Body of pancreas (tissue), 4 donors: ENCODE measurements at regions of chr4 and their contacts with region 1.

Region 1: DNA sequence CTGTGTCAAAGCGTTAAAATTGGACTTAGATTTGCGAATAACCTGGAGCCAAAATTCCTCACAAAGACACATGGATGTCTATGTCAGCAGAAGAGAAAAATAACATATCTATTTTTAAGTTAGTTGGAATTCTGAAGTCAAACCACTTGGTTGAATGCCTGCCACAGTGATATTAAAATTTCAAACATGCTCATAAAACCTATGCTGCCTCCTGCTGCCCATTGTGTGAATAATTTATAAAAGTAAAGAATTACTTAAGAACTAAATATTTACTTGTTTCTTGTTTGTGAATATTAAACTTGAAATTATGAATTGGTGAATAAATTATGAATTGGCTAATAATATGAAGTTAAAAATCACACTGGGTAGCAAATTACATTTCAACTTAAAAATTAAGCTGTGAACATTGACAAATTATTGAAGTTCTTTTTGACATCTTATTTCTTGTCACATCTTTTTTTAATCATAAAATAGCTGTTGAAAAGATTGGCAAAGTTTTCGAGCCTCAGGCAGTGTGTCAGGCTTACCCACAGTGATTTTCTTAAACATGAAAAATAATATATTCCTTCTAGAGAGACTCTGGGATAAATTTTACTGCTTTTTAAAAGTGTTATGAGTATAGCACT is 35.4 kb downstream of the FABP2 start:
- DNase-seq: peak in 2 of 4 donors; percentile 25 to 35
- ATAC-seq: peak; percentile 50
- H3K4me3 ChIP-seq: no peak overlapping the region
- H3K27ac ChIP-seq: no peak overlapping the region
- H3K4me1 ChIP-seq: peaks cover 27% of the 10 kb centered on the region
- H3K27me3 ChIP-seq: no peaks in the 10 kb centered on the region
- CTCF ChIP-seq: peak in 6 of 7 experiments; percentile 39 to 64 (median 58)
- POLR2A ChIP-seq: no peak

Region 2: GRCh38 chr4:118905566-118905965 is 380.9 kb before region 1 on chr4:
- intact Hi-C with region 1: no loop called
- DNase-seq: no peak
- ATAC-seq: no peak
- H3K4me3 ChIP-seq: no peak overlapping the region
- H3K27ac ChIP-seq: no peak overlapping the region
- H3K4me1 ChIP-seq: peaks cover 4% of the 10 kb centered on the region
- H3K27me3 ChIP-seq: no peaks in the 10 kb centered on the region
- CTCF ChIP-seq: no peak
- POLR2A ChIP-seq: no peak

Region 3: DNA sequence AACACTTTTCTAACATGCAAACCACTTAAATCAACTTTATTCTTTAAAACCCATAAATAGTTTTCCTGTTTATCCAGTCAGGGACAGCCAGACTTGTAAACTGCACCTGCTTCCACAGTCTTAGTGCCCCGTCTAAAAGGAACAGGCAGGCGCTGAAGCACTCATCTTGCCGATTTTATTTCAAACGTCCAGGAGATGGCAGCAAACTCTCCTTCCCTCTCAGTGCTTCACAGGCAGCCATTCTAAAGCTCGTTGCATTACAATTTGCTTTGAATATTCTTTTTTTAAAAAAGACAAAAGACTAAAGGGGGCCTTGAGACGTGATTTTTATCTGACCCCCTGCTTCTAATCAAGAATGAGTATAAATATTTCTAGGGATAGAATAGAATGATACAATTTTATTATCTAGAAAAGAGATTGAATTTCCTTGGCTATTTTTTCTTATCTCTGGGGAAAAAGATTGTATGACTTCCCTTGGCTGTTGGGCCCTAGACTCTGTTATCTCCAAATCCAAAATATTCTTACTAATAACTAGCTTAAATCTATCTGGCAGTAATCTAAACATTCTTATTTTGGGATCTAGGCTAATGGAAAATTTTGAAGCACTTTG is 244.4 kb before region 1 on chr4:
- intact Hi-C with region 1: loop called (anchors 5 kb)
- DNase-seq: peak; percentile 65 to 75 (median 68)
- ATAC-seq: peak; percentile 93
- H3K4me3 ChIP-seq: no peak overlapping the region
- H3K27ac ChIP-seq: no peak overlapping the region
- H3K4me1 ChIP-seq: peaks cover 7% of the 10 kb centered on the region
- H3K27me3 ChIP-seq: no peaks in the 10 kb centered on the region
- CTCF ChIP-seq: peak in 6 of 7 experiments; percentile 52 to 82 (median 67)
- POLR2A ChIP-seq: no peak

Region 4: DNA sequence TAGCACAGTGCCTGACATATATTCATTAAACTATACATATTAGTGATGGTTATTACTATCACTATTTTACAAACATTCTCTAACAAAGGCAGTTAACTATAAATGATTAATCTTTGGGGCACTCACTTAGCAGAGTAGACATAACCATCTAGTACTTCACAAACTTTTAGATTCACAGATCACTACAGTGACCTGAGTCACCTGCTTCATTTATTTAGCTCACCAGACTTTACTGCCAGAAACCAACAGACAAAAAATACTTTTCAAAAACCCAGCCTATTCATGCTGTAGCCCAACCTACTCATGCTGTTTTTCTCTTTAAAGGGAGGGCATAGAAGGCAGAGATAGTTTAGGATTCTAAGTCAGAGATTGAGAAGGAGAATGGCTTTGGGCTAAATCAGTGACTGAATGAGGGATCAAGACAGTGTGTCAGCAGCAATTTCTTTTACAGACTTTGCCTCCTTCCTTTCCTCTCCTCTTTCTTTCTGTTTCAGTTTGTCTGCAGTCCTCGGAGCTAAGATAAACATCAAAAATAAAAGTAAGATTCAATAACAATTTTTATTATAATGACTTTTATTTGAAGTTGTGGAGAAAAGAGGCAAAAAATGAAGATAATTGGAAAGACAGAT is 376.8 kb after region 1 on chr4:
- intact Hi-C with region 1: no loop called
- DNase-seq: no peak
- ATAC-seq: no peak
- H3K4me3 ChIP-seq: no peak overlapping the region
- H3K27ac ChIP-seq: peak overlapping the region in 2 of 4 donors; percentile 45 to 47
- H3K4me1 ChIP-seq: no peaks in the 10 kb centered on the region
- H3K27me3 ChIP-seq: no peaks in the 10 kb centered on the region
- CTCF ChIP-seq: no peak
- POLR2A ChIP-seq: no peak

Region 5: DNA sequence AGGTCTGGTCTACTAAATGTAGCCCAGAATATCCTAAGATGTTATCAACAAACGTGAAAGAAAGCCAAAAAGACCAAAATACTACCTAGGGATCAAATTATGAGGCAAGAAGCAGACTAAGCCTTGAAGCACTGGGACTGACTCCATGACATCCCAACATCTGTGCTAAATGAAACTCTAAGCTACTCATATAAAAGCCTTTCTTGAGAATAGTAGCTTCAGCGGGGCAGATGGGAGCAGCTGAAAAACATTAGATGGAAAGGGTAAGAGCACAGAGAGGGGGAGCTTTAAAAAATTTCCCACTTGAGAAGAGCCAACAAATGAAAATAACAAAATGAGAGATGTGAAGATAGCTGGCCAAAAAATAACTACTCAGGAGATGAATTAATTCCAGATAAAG is 698.5 kb after region 1 on chr4:
- intact Hi-C with region 1: no loop called
- DNase-seq: no peak
- ATAC-seq: no peak
- H3K4me3 ChIP-seq: no peak overlapping the region
- H3K27ac ChIP-seq: no peak overlapping the region
- H3K4me1 ChIP-seq: no peaks in the 10 kb centered on the region
- H3K27me3 ChIP-seq: no peaks in the 10 kb centered on the region
- CTCF ChIP-seq: no peak
- POLR2A ChIP-seq: no peak